AG04449 (cell line): ENCODE measurements at regions of chr16 and their contacts with region 1.

Region 1: DNA sequence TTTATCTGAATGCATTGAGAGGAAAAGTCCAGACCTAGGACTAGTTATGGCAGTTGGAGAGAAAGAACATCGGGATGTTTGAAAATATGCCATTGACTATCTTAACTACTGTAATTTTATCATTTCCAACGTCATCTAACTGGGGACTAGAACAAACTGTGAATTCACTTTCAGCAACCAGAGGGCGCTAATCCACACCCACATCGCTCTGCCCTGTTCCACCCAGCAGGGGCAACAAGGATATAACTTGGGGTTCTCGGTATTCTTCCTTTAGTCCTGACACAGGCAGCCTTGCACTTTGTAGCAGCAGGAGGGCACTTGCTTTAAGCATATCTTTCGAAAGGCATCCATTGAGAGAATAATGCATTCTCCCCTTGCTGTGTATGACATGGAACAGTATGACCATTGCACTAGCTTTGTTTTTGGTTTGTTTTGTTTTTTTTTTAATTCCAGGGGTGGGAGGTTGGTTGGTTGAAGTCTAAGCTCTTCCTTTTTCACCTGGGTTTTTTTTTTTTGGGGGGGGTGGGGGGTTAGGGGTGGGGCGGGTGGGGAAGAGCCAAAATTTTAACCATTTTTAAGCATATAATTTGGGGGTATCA is 31.5 kb downstream of the SIAH1 start:
- DNase-seq: no peak
- H3K4me3 ChIP-seq: no peak overlapping the region
- CTCF ChIP-seq: peak; percentile 83

Region 2: GRCh38 chr16:48365581-48366164 is 12.0 kb after region 1 on chr16:
- CTCF ChIA-PET with region 1: interaction called, 49 read pairs
- POLR2A ChIA-PET with region 1: interaction called, 4 read pairs
- DNase-seq: peak; percentile 19
- H3K4me3 ChIP-seq: peak overlapping the region; percentile 61
- CTCF ChIP-seq: peak; percentile 10

Region 3: DNA sequence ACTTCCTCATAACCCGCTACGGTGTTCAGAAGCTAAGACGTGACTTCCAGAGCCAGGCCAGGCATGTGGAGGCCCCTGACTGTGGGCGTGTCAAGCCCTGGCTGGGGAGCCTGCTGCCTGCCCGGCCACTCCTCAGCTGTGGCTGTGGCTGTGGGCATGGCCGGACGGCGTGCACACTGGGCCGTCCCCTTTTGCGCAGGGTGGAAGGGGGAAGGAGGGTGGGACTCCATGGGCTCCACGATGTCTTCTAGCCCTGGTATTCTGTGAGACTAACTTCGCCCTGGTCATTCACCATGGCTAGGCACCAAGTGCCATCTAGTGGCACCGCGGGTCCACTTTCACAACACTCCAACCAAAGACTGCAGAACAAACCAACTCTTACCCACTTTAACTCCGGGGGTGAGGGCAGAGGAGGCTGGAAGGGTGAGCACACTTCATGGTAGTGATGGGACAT is 188.4 kb after region 1 on chr16:
- CTCF ChIA-PET with region 1: interaction called, 37 read pairs
- POLR2A ChIA-PET with region 1: interaction called, 3 read pairs
- DNase-seq: no peak
- H3K4me3 ChIP-seq: no peak overlapping the region
- CTCF ChIP-seq: peak; percentile 66